ENCODE measurements at regions of chr10 and their contacts with region 1.

Region 1: GRCh38 chr10:80504158-80504811 is 33.4 kb upstream of the SH2D4B start:
- DNase-seq: no peak
- ATAC-seq: no peak
- H3K4me3 Mint-ChIP-seq: no peak overlapping the region
- H3K27ac Mint-ChIP-seq: peak overlapping the region; percentile 87
- H3K4me1 Mint-ChIP-seq: peaks cover 73% of the 10 kb centered on the region
- H3K27me3 Mint-ChIP-seq: no peaks in the 10 kb centered on the region

Region 2: GRCh38 chr10:80382989-80383388 is 121.3 kb before region 1 on chr10:
- CTCF ChIA-PET with region 1: interaction called, 57 read pairs
- POLR2A ChIA-PET with region 1: interaction called, 3 read pairs
- DNase-seq: peak; percentile 76
- ATAC-seq: peak; percentile 68
- H3K4me3 Mint-ChIP-seq: no peak overlapping the region
- H3K27ac Mint-ChIP-seq: no peak overlapping the region
- H3K4me1 Mint-ChIP-seq: peaks cover 14% of the 10 kb centered on the region
- H3K27me3 Mint-ChIP-seq: peaks cover 12% of the 10 kb centered on the region

Region 3: DNA sequence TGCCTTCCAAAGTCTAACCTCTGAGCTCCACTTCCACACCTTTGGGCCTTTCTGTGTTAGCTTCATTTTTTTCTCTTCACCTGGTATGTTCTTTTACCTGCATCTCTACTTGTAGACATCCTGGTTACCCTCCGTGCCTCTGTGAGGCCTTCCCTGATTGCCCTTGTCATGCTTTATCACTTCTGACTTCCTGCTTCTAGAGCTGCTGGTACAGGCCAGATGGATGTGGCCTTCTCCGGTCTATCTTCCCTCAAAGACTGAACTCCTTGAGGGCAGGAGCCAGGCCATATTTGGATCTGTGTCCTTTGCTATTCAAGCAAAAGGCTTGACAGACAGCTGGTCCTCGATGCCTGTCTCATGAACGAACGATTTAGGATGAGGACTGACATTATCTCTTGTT is 72.7 kb before region 1 on chr10:
- CTCF ChIA-PET with region 1: interaction called, 13 read pairs
- POLR2A ChIA-PET with region 1: no interaction called
- DNase-seq: no peak
- ATAC-seq: no peak
- H3K4me3 Mint-ChIP-seq: no peak overlapping the region
- H3K27ac Mint-ChIP-seq: no peak overlapping the region
- H3K4me1 Mint-ChIP-seq: no peaks in the 10 kb centered on the region
- H3K27me3 Mint-ChIP-seq: no peaks in the 10 kb centered on the region

Region 4: GRCh38 chr10:80444646-80445319 is 59.5 kb before region 1 on chr10:
- CTCF ChIA-PET with region 1: interaction called, 1,113 read pairs
- POLR2A ChIA-PET with region 1: interaction called, 14 read pairs
- DNase-seq: peak; percentile 62
- ATAC-seq: peak; percentile 89
- H3K4me3 Mint-ChIP-seq: no peak overlapping the region
- H3K27ac Mint-ChIP-seq: peak overlapping the region; percentile 82
- H3K4me1 Mint-ChIP-seq: peaks cover 39% of the 10 kb centered on the region
- H3K27me3 Mint-ChIP-seq: peaks cover 16% of the 10 kb centered on the region

Region 5: DNA sequence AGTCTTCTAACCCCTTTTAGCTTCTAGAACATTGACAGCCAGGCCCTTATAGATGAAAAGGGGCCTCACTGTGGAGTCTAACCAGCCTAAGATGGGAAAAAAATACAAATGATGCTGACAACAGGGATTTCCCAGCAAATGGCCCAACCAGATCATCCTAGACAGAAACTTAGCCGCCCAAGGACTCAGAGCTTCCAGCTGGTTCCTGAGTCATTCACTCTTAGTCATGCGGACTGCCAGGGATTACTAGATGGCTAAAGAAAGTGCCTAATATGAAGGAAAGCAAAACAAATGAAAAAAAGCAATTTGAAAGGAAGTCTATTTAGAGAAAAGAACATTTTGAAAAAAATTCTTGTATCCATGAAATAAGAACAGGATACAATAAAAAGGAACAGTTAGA is 26.5 kb before region 1 on chr10:
- CTCF ChIA-PET with region 1: interaction called, 1,113 read pairs
- POLR2A ChIA-PET with region 1: no interaction called
- DNase-seq: no peak
- ATAC-seq: no peak
- H3K4me3 Mint-ChIP-seq: no peak overlapping the region
- H3K27ac Mint-ChIP-seq: no peak overlapping the region
- H3K4me1 Mint-ChIP-seq: peaks cover 78% of the 10 kb centered on the region
- H3K27me3 Mint-ChIP-seq: no peaks in the 10 kb centered on the region

Region 6: GRCh38 chr10:80493522-80494051 is 10.7 kb before region 1 on chr10:
- CTCF ChIA-PET with region 1: interaction called, 46 read pairs
- POLR2A ChIA-PET with region 1: interaction called, 52 read pairs
- DNase-seq: no peak
- ATAC-seq: peak; percentile 72
- H3K4me3 Mint-ChIP-seq: peak overlapping the region; percentile 51
- H3K27ac Mint-ChIP-seq: peak overlapping the region; percentile 82
- H3K4me1 Mint-ChIP-seq: peaks cover 99% of the 10 kb centered on the region
- H3K27me3 Mint-ChIP-seq: no peaks in the 10 kb centered on the region

Region 7: GRCh38 chr10:80535671-80536365 is 31.5 kb after region 1 on chr10:
- CTCF ChIA-PET with region 1: interaction called, 12 read pairs
- POLR2A ChIA-PET with region 1: no interaction called
- DNase-seq: peak; percentile 81
- ATAC-seq: peak; percentile 89
- H3K4me3 Mint-ChIP-seq: peak overlapping the region; percentile 86
- H3K27ac Mint-ChIP-seq: peak overlapping the region; percentile 97
- H3K4me1 Mint-ChIP-seq: peaks cover 56% of the 10 kb centered on the region
- H3K27me3 Mint-ChIP-seq: no peaks in the 10 kb centered on the region

Measured in activated CD8-positive, alpha-beta T cell treated with anti-CD3 and anti-CD28 coated beads, Interleukin-2, amount 10 ng/mL, durations not matched to agents 7 days and 5 days (primary cell).